Activated CD4-positive, alpha-beta T cell treated with anti-CD3 and anti-CD28 coated beads, Interleukin-2, amount 10 ng/mL, durations not matched to agents 7 days and 5 days (primary cell): ENCODE measurements at regions of chr16 and their contacts with region 1.

Region 1: DNA sequence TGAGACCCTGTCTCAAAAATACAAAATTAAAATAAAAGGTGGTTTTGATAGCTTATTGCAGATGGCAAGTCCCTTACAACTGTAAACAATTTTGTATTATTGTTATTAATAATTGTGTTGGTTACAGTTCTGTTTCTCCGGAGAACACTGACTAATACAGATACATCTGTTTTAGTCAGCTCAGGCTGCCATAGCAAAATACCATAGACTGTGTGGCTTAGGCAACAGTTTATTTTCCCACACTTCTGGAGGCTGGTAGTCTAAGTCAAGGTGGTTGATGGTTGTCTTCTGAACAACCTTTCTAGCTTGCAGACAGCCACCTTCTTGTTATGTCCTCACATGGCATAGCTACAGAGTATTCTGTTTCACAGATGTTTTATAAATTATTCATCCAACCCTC is 14.2 kb upstream of the IL21R start:
- DNase-seq: no peak
- H3K4me3 Mint-ChIP-seq: no peak overlapping the region
- H3K27ac Mint-ChIP-seq: no peak overlapping the region
- H3K4me1 Mint-ChIP-seq: peaks cover 13% of the 10 kb centered on the region
- H3K27me3 Mint-ChIP-seq: peaks cover 3% of the 10 kb centered on the region

Region 2: GRCh38 chr16:27355610-27356009 is 32.1 kb before region 1 on chr16:
- CTCF ChIA-PET with region 1: no interaction called
- POLR2A ChIA-PET with region 1: no interaction called
- DNase-seq: peak; percentile 43
- H3K4me3 Mint-ChIP-seq: no peak overlapping the region
- H3K27ac Mint-ChIP-seq: peak overlapping the region; percentile 36
- H3K4me1 Mint-ChIP-seq: peaks cover 23% of the 10 kb centered on the region
- H3K27me3 Mint-ChIP-seq: no peaks in the 10 kb centered on the region

Region 3: GRCh38 chr16:27374804-27375425 is 12.8 kb before region 1 on chr16:
- CTCF ChIA-PET with region 1: interaction called, 22 read pairs
- POLR2A ChIA-PET with region 1: no interaction called
- DNase-seq: peak; percentile 45
- H3K4me3 Mint-ChIP-seq: no peak overlapping the region
- H3K27ac Mint-ChIP-seq: no peak overlapping the region
- H3K4me1 Mint-ChIP-seq: peaks cover 46% of the 10 kb centered on the region
- H3K27me3 Mint-ChIP-seq: no peaks in the 10 kb centered on the region

Region 4: GRCh38 chr16:27401768-27402568 is 14.2 kb after region 1 on chr16 and contains the start of gene IL21R:
- CTCF ChIA-PET with region 1: interaction called, 17 read pairs
- POLR2A ChIA-PET with region 1: no interaction called
- DNase-seq: peak; percentile 87
- H3K4me3 Mint-ChIP-seq: peak within 1 kb of the TSS; percentile 98
- H3K27ac Mint-ChIP-seq: peak within 1 kb of the TSS; percentile 98
- H3K4me1 Mint-ChIP-seq: peaks cover 58% of the 10 kb centered on the region
- H3K27me3 Mint-ChIP-seq: no peaks in the 10 kb centered on the region
- total RNA-seq, gene IL21R: 44.4 to 45.6 TPM

Region 5: DNA sequence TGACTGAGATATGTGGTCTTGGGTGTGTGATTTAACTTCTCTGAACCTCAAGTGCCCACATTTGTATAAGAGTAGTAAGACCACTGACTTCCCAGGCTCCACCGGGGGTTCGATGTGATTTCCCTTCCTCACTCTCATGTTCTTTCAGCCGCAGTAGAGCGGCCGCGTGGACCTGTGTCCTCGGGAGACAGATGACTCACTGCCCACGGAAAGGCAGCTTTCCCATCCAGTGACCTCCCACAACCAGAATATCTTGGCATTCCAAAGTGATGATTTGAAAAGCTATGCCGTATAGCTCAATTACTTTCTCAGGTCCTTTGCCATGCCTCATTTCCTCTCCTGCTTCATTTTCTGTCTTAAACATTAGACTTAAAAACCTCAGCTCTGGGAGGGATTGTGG is 87.8 kb after region 1 on chr16:
- CTCF ChIA-PET with region 1: no interaction called
- POLR2A ChIA-PET with region 1: no interaction called
- DNase-seq: no peak
- H3K4me3 Mint-ChIP-seq: no peak overlapping the region
- H3K27ac Mint-ChIP-seq: no peak overlapping the region
- H3K4me1 Mint-ChIP-seq: no peaks in the 10 kb centered on the region
- H3K27me3 Mint-ChIP-seq: no peaks in the 10 kb centered on the region